ENCODE measurements at regions of chr16 and their contacts with region 1.

Region 1: DNA sequence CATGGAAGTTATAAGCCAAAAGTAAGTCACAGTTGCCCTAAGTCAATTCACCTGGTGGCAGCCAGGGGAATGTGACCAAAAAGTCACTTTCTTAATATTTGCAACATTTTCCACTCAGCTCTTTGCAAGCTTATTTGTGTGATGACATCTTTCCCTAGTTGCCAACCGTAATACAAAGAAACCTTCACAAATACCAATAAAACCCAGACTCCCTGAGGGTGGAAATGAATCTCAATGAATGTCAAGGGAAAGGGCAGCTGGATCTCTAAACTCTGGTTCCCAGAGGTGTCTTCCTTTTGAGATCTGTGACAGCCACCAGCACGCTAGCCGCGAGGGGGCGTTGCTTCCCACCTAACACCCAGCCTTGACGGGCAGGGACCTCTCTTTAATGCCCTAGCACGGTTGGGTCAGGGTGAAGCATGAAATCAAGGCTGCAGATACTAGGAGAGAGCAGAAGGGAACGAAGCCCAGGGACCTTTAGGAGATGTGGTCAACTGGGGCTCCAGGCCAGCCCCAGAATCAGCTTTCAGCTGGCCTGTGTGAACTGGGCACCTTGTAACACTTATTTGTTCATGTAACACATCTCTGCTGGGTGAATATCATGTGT is 82.2 kb downstream of the CMC2 start:
- DNase-seq: no peak
- ATAC-seq: peak; percentile 87
- H3K4me3 ChIP-seq: no peak overlapping the region
- H3K27ac ChIP-seq: no peak overlapping the region
- H3K4me1 ChIP-seq: no peaks in the 10 kb centered on the region
- H3K27me3 ChIP-seq: no peaks in the 10 kb centered on the region
- CTCF ChIP-seq: peak; percentile 75

Region 2: GRCh38 chr16:80948886-80949493 is 24.5 kb after region 1 on chr16:
- CTCF ChIA-PET with region 1: interaction called, 13 read pairs
- POLR2A ChIA-PET with region 1: no interaction called
- in situ Hi-C with region 1: no loop called
- intact Hi-C with region 1: no loop called
- DNase-seq: no peak
- ATAC-seq: peak; percentile 51
- H3K4me3 ChIP-seq: no peak overlapping the region
- H3K27ac ChIP-seq: no peak overlapping the region
- H3K4me1 ChIP-seq: no peaks in the 10 kb centered on the region
- H3K27me3 ChIP-seq: no peaks in the 10 kb centered on the region
- CTCF ChIP-seq: peak; percentile 73